ENCODE measurements at regions of chr14 and their contacts with region 1.

Region 1: DNA sequence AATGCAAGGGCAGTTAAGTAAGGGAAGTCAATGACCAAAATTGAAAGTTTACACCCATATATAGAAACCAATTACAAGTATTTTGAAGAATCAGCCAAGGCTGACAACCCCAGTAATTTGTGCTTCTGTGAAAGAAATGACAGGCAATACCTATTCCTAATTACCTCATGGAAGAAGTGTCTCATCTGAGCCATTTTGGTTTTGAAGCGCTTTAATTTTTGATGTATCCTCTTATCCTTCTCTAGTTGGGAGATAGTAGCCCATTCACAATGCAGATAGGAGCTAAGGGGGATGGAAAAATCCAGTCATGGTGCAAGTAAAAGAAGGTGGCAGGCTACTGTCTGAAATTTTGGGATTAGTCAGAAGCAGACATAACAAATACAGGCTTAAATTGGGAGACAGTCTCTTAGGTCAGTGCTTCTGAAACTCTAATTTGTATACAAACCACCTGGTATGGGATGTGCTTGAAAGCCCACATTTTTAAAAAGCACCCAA is 30.4 kb upstream of the SUPT16H start:
- DNase-seq: peak; percentile 14
- H3K4me3 Mint-ChIP-seq: no peak overlapping the region
- H3K27ac Mint-ChIP-seq: peak overlapping the region; percentile 77
- H3K4me1 Mint-ChIP-seq: peaks cover 35% of the 10 kb centered on the region
- H3K27me3 Mint-ChIP-seq: no peaks in the 10 kb centered on the region

Region 2: GRCh38 chr14:21263656-21264411 is 150.3 kb before region 1 on chr14:
- CTCF ChIA-PET with region 1: no interaction called
- intact Hi-C with region 1: loop called (anchors 1 kb)
- DNase-seq: no peak
- H3K4me3 Mint-ChIP-seq: peak overlapping the region; percentile 100
- H3K27ac Mint-ChIP-seq: peak overlapping the region; percentile 100
- H3K4me1 Mint-ChIP-seq: peaks cover 68% of the 10 kb centered on the region
- H3K27me3 Mint-ChIP-seq: no peaks in the 10 kb centered on the region

Region 3: GRCh38 chr14:21437063-21437901 is 23.1 kb after region 1 on chr14:
- CTCF ChIA-PET with region 1: interaction called, 3 read pairs
- intact Hi-C with region 1: loop called (anchors 1 kb)
- DNase-seq: peak; percentile 100
- H3K4me3 Mint-ChIP-seq: peak overlapping the region; percentile 84
- H3K27ac Mint-ChIP-seq: peak overlapping the region; percentile 90
- H3K4me1 Mint-ChIP-seq: peaks cover 52% of the 10 kb centered on the region
- H3K27me3 Mint-ChIP-seq: no peaks in the 10 kb centered on the region

Region 4: DNA sequence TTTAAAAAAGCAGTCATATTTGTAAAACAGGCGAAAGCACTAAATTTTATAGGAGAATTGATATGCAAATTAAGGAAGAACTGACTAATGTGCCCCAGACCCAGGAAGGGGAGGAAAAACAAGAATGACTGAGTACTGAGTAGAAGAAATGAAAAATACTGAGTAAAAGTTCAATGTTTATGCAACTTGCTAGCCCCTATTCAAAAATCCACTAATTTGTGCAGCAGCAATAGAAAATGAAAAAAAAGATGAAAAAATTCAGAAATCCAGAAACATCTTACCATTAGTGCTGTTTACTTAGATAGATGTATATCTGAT is 35.7 kb after region 1 on chr14:
- CTCF ChIA-PET with region 1: no interaction called
- intact Hi-C with region 1: loop called (anchors 1 kb)
- DNase-seq: no peak
- H3K4me3 Mint-ChIP-seq: no peak overlapping the region
- H3K27ac Mint-ChIP-seq: peak overlapping the region; percentile 85
- H3K4me1 Mint-ChIP-seq: peaks cover 72% of the 10 kb centered on the region
- H3K27me3 Mint-ChIP-seq: no peaks in the 10 kb centered on the region

Region 5: DNA sequence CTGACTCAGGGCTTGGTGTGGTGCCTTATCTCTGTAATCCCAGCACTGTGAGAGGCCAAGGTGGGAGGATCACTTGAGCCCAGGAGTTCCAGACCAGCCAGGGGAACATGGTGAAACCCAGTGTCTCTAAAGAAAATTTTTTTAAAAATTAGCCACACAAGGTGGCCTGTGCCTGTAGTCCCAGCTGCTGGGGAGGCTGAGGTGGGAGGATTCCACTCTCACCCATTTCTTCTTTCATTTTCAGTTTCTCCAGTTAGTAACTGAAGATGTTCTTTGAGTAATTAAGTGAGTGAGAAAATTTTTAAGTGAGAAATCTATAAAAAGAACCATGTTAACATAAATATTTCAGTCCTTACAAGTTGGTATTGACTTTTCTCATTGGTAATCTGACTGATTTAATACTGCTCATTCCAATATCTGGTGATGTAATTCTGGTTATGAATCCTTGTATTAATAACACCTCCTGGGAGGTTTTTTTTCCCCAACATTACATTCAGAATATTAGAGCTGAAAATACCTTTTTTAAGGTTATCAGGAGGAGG is 90.9 kb after region 1 on chr14:
- CTCF ChIA-PET with region 1: no interaction called
- intact Hi-C with region 1: loop called (anchors 1 kb)
- DNase-seq: peak; percentile 47
- H3K4me3 Mint-ChIP-seq: no peak overlapping the region
- H3K27ac Mint-ChIP-seq: peak overlapping the region; percentile 82
- H3K4me1 Mint-ChIP-seq: peaks cover 41% of the 10 kb centered on the region
- H3K27me3 Mint-ChIP-seq: no peaks in the 10 kb centered on the region

Region 6: GRCh38 chr14:21557084-21557901 is 143.1 kb after region 1 on chr14:
- CTCF ChIA-PET with region 1: interaction called, 3 read pairs
- intact Hi-C with region 1: loop called (anchors 5 kb)
- DNase-seq: peak; percentile 91
- H3K4me3 Mint-ChIP-seq: peak overlapping the region; percentile 27
- H3K27ac Mint-ChIP-seq: no peak overlapping the region
- H3K4me1 Mint-ChIP-seq: peaks cover 6% of the 10 kb centered on the region
- H3K27me3 Mint-ChIP-seq: no peaks in the 10 kb centered on the region